ENCODE measurements at regions of chr11 and their contacts with region 1.

Region 1: DNA sequence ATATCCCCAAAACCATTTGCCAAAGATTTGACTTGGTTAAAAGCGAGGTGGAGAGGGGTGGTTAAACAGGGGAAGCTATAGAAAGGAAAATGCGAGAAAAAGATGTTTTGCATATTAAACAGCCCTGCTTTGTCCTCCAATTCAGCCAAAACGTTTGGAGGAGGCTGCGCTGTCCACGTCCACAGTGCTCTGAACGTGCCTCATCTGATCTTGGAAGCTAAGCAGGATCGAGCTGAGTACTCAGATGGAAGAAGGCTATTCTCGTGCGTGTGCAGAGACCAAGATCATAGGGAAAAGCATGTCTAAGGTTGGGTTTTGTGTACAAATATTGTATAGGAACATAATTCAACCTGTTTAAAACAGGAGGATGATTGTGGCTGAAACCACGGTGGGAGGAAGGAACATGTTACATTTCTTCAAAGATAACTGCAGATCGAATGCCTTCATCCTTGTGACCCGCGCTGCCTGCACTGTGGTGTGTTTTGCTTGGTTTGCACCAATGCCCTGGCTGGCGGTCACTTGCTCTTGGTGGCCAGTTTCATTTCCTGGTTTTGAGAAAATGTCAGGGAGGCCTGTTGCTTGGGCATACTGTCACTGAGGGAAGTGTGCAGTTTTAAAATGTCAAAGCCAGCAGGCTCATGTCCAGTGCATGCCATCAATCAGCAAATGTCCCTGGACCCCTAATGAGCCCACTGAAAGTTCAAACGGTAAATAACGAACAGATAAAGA is 40.4 kb downstream of the FLI1 start:
- DNase-seq: peak; percentile 36
- H3K4me3 Mint-ChIP-seq: peak overlapping the region; percentile 63
- H3K27ac Mint-ChIP-seq: peak overlapping the region; percentile 81
- H3K4me1 Mint-ChIP-seq: peaks cover 99% of the 10 kb centered on the region
- H3K27me3 Mint-ChIP-seq: no peaks in the 10 kb centered on the region

Region 2: GRCh38 chr11:128624269-128625175 is 109.7 kb before region 1 on chr11:
- CTCF ChIA-PET with region 1: no interaction called
- POLR2A ChIA-PET with region 1: no interaction called
- DNase-seq: peak; percentile 56
- H3K4me3 Mint-ChIP-seq: peak overlapping the region; percentile 64
- H3K27ac Mint-ChIP-seq: peak overlapping the region; percentile 94
- H3K4me1 Mint-ChIP-seq: peaks cover 93% of the 10 kb centered on the region
- H3K27me3 Mint-ChIP-seq: no peaks in the 10 kb centered on the region

Region 3: GRCh38 chr11:128745311-128746136 is 11.3 kb after region 1 on chr11:
- CTCF ChIA-PET with region 1: interaction called, 10 read pairs
- POLR2A ChIA-PET with region 1: no interaction called
- DNase-seq: no peak
- H3K4me3 Mint-ChIP-seq: no peak overlapping the region
- H3K27ac Mint-ChIP-seq: peak overlapping the region; percentile 14
- H3K4me1 Mint-ChIP-seq: peaks cover 76% of the 10 kb centered on the region
- H3K27me3 Mint-ChIP-seq: no peaks in the 10 kb centered on the region